ENCODE measurements at regions of chr1 and their contacts with region 1.

Region 1: GRCh38 chr1:153677718-153678505 is 576 bp upstream of the NPR1 start:
- DNase-seq: peak in 4 of 5 donors; percentile 41 to 51 (median 46)
- H3K4me3 ChIP-seq: peak overlapping the region; percentile 11 to 48
- H3K4me3 Mint-ChIP-seq: peak overlapping the region; percentile 77 to 91 (median 85)
- H3K27ac ChIP-seq: no peak overlapping the region
- H3K27ac Mint-ChIP-seq: peak overlapping the region in 3 of 7 donors; percentile 12 to 73 (median 71)
- H3K4me1 ChIP-seq: peaks cover 27% of the 10 kb centered on the region
- H3K4me1 Mint-ChIP-seq: peaks cover 15 to 21% (median 16%) of the 10 kb centered on the region in 4 donors
- H3K27me3 ChIP-seq: peaks cover 32% of the 10 kb centered on the region
- H3K27me3 Mint-ChIP-seq: peaks cover 28 to 32% of the 10 kb centered on the region in 2 donors

Region 2: DNA sequence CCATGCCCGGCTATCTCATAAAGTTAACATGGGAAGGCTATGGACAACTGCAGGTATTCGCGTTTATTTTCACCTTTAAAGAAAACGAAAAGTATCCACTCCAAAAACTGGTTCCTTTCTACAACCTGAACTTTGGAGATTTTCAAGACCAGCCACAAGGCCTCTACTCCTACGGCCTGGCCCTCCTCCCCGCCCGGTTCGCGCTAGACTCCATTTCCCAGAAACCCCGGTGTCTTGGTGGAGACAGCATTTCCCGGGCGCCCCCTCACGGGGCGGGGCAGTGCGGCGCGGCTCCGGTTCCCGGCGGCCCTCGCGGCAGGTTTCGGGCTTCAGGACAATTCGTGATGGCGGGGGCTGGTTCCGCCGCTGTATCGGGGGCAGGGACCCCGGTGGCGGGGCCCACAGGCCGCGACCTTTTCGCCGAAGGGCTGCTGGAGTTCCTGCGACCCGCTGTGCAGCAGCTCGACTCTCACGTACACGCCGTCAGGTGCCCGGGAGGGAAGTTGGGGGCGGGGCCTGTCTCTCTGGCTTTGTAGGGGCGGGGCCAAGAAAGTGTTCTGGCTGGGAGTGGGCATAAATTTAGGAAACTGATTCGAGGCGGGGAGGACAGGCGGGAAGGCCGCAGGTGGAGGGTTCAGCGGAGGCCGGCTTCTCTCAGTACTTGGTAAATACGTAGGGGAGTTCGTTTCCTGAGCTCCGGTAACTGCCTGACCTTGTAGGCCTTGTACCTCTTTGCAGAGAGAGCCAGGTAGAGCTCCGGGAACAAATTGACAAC is 19.3 kb before region 1 on chr1 and contains the start of gene SNAPIN:
- CTCF ChIA-PET with region 1: no interaction called
- POLR2A ChIA-PET with region 1: interaction called, 11 read pairs
- intact Hi-C with region 1: loop called (anchors 2 kb)
- DNase-seq: peak; percentile 88 to 91 (median 89)
- H3K4me3 ChIP-seq: peak within 1 kb of the TSS; percentile 66 to 67
- H3K4me3 Mint-ChIP-seq: peak within 1 kb of the TSS; percentile 94 to 97 (median 96)
- H3K27ac ChIP-seq: peak within 1 kb of the TSS; percentile 89
- H3K27ac Mint-ChIP-seq: peak within 1 kb of the TSS; percentile 89 to 97 (median 95)
- H3K4me1 ChIP-seq: peaks cover 19% of the 10 kb centered on the region
- H3K4me1 Mint-ChIP-seq: peaks cover 9 to 25% (median 14%) of the 10 kb centered on the region in 4 donors
- H3K27me3 ChIP-seq: no peaks in the 10 kb centered on the region
- H3K27me3 Mint-ChIP-seq: no peaks in the 10 kb centered on the region
- total RNA-seq, gene SNAPIN: 26.4 to 28.2 TPM

Region 3: GRCh38 chr1:153749408-153750005 is 71.6 kb after region 1 on chr1:
- CTCF ChIA-PET with region 1: interaction called, 29 read pairs
- POLR2A ChIA-PET with region 1: no interaction called
- intact Hi-C with region 1: loop called (anchors 1 kb)
- DNase-seq: peak; percentile 73 to 78 (median 77)
- H3K4me3 ChIP-seq: no peak overlapping the region
- H3K4me3 Mint-ChIP-seq: no peak overlapping the region
- H3K27ac ChIP-seq: no peak overlapping the region
- H3K27ac Mint-ChIP-seq: peak overlapping the region in 3 of 7 donors; percentile 6 to 73 (median 70)
- H3K4me1 ChIP-seq: no peaks in the 10 kb centered on the region
- H3K4me1 Mint-ChIP-seq: peaks cover 0 to 8% (median 5%) of the 10 kb centered on the region in 4 donors
- H3K27me3 ChIP-seq: no peaks in the 10 kb centered on the region
- H3K27me3 Mint-ChIP-seq: no peaks in the 10 kb centered on the region

Region 4: GRCh38 chr1:153796791-153797659 is 119.1 kb after region 1 on chr1:
- CTCF ChIA-PET with region 1: no interaction called
- POLR2A ChIA-PET with region 1: no interaction called
- intact Hi-C with region 1: loop called (anchors 1 kb)
- DNase-seq: peak; percentile 76 to 85 (median 80)
- H3K4me3 ChIP-seq: no peak overlapping the region
- H3K4me3 Mint-ChIP-seq: no peak overlapping the region
- H3K27ac ChIP-seq: no peak overlapping the region
- H3K27ac Mint-ChIP-seq: peak overlapping the region; percentile 8 to 79 (median 65)
- H3K4me1 ChIP-seq: no peaks in the 10 kb centered on the region
- H3K4me1 Mint-ChIP-seq: peaks cover 0 to 16% (median 8%) of the 10 kb centered on the region in 4 donors
- H3K27me3 ChIP-seq: no peaks in the 10 kb centered on the region
- H3K27me3 Mint-ChIP-seq: no peaks in the 10 kb centered on the region